ENCODE measurements at regions of chr18 and their contacts with region 1.

Region 1: DNA sequence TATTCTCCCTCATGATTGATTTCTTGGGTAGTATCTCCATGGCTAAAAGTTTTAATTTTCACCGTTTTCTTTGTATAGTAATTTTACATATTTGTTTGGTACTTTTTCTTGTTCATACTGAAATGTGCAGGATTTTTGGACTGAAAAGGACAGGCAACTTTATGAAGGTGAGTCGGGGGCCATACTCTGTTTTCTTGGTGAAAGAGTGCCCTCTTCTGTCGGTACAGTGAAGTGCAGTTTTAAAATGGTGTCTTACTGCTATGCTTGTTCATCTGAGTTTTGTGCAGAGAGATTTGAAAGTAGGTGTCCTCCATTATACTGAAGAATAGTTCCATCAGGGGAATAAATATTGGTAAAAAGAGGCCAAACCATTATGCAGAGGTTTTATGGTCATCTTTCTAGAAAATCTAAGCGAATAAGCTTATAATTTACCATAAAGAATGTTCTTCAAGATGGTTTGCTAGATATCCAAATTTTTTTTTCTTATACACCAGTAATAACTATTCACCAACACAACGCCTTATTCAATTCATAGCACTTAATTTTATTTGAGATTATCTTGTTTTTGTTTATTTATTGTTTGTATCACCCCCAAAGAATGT is 8.7 kb upstream of the SERPINB13 start:
- DNase-seq: peak; percentile 27
- ATAC-seq: no peak
- H3K4me3 Mint-ChIP-seq: no peak overlapping the region
- H3K27ac Mint-ChIP-seq: no peak overlapping the region
- H3K4me1 Mint-ChIP-seq: no peaks in the 10 kb centered on the region
- H3K27me3 Mint-ChIP-seq: peaks cover 8% of the 10 kb centered on the region

Region 2: GRCh38 chr18:63339920-63340484 is 238.5 kb before region 1 on chr18:
- CTCF ChIA-PET with region 1: no interaction called
- POLR2A ChIA-PET with region 1: no interaction called
- intact Hi-C with region 1: loop called in 1 of 2 experiments (anchors 5 kb)
- DNase-seq: peak; percentile 67
- ATAC-seq: peak; percentile 58
- H3K4me3 Mint-ChIP-seq: no peak overlapping the region
- H3K27ac Mint-ChIP-seq: no peak overlapping the region
- H3K4me1 Mint-ChIP-seq: peaks cover 14% of the 10 kb centered on the region
- H3K27me3 Mint-ChIP-seq: no peaks in the 10 kb centered on the region

Region 3: GRCh38 chr18:63518178-63519012 is 60.1 kb before region 1 on chr18:
- CTCF ChIA-PET with region 1: interaction called, 109 read pairs
- POLR2A ChIA-PET with region 1: no interaction called
- intact Hi-C with region 1: loop called (anchors 1 kb)
- DNase-seq: peak; percentile 71
- ATAC-seq: peak; percentile 91
- H3K4me3 Mint-ChIP-seq: no peak overlapping the region
- H3K27ac Mint-ChIP-seq: no peak overlapping the region
- H3K4me1 Mint-ChIP-seq: peaks cover 4% of the 10 kb centered on the region
- H3K27me3 Mint-ChIP-seq: peaks cover 9% of the 10 kb centered on the region

Region 4: DNA sequence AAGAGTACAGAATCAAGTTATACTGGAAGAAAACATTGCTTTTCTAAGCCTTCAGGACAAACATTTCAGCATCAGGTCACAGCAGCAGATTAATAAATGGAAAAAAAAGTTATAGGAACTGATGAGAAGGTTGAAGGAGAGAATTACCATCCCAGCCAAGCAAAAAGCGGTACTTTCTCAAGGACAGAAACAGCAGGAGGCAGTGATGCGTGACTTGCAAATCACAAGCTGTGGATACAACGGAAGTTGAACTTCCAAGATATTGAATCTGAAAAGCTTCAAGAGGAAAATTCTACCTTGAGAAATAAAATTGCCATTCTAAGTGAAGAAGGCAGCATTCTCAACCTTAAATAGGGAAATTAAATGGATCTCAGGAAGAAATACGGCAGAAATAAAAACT is 54.8 kb before region 1 on chr18:
- CTCF ChIA-PET with region 1: interaction called, 109 read pairs
- POLR2A ChIA-PET with region 1: no interaction called
- intact Hi-C with region 1: loop called (anchors 1 kb)
- DNase-seq: no peak
- ATAC-seq: no peak
- H3K4me3 Mint-ChIP-seq: no peak overlapping the region
- H3K27ac Mint-ChIP-seq: no peak overlapping the region
- H3K4me1 Mint-ChIP-seq: no peaks in the 10 kb centered on the region
- H3K27me3 Mint-ChIP-seq: peaks cover 10% of the 10 kb centered on the region

Region 5: GRCh38 chr18:63562284-63562683 is 16.2 kb before region 1 on chr18:
- CTCF ChIA-PET with region 1: interaction called, 11 read pairs
- POLR2A ChIA-PET with region 1: no interaction called
- intact Hi-C with region 1: no loop called
- DNase-seq: no peak
- ATAC-seq: no peak
- H3K4me3 Mint-ChIP-seq: no peak overlapping the region
- H3K27ac Mint-ChIP-seq: no peak overlapping the region
- H3K4me1 Mint-ChIP-seq: no peaks in the 10 kb centered on the region
- H3K27me3 Mint-ChIP-seq: peaks cover 7% of the 10 kb centered on the region

Region 6: DNA sequence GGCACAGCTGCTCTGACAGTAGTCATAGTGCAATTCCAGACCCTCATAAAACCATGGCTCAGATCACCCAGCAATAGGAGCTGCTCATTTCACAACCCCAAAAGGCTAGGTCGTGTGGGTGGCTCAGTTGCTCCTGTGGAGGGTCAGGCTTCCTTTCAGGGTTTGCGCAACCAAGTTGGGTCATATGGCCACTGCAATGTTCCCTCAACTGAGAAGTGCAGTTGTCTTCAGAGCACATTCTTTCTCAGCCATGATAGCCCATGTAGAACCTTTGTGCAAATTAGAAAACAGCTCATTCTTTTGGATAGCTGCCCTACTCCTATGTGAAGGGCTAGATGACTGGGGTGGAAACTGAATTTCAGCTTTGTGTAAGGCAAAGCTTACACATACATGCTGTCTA is 11.9 kb after region 1 on chr18:
- CTCF ChIA-PET with region 1: interaction called, 12 read pairs
- POLR2A ChIA-PET with region 1: no interaction called
- intact Hi-C with region 1: no loop called
- DNase-seq: no peak
- ATAC-seq: no peak
- H3K4me3 Mint-ChIP-seq: no peak overlapping the region
- H3K27ac Mint-ChIP-seq: no peak overlapping the region
- H3K4me1 Mint-ChIP-seq: no peaks in the 10 kb centered on the region
- H3K27me3 Mint-ChIP-seq: peaks cover 3% of the 10 kb centered on the region

Region 7: GRCh38 chr18:63848159-63848558 is 269.7 kb after region 1 on chr18:
- CTCF ChIA-PET with region 1: interaction called, 4 read pairs
- POLR2A ChIA-PET with region 1: no interaction called
- intact Hi-C with region 1: loop called in 1 of 2 experiments (anchors 5 kb)
- DNase-seq: no peak
- ATAC-seq: peak; percentile 39
- H3K4me3 Mint-ChIP-seq: no peak overlapping the region
- H3K27ac Mint-ChIP-seq: no peak overlapping the region
- H3K4me1 Mint-ChIP-seq: no peaks in the 10 kb centered on the region
- H3K27me3 Mint-ChIP-seq: peaks cover 15% of the 10 kb centered on the region

Region 8: DNA sequence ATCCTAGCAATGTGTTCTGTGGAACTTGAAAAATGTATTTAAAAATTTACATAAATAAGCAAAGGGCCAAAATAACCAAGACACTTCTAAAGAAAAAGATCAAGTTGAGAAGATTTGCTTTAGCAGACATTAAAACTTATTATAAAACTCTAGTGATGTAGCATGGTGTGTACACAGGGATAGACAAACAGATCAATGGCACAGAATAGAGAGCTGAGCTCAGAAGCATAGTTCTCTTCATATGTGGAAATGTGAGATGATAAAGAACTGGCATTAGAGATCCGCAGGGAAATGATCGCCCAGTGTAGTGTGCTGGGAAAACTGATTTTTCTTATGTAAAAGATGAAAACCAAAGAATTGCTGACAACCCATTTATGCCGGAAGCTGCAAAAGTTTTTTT is 430.8 kb after region 1 on chr18:
- CTCF ChIA-PET with region 1: no interaction called
- POLR2A ChIA-PET with region 1: no interaction called
- intact Hi-C with region 1: no loop called
- DNase-seq: no peak
- ATAC-seq: no peak
- H3K4me3 Mint-ChIP-seq: no peak overlapping the region
- H3K27ac Mint-ChIP-seq: no peak overlapping the region
- H3K4me1 Mint-ChIP-seq: no peaks in the 10 kb centered on the region
- H3K27me3 Mint-ChIP-seq: peaks cover 2% of the 10 kb centered on the region

Measured in activated CD4-positive, alpha-beta T cell treated with anti-CD3 and anti-CD28 coated beads for 36 hours (primary cell).